OCI-LY7 (cell line): ENCODE measurements at regions of chr12 and their contacts with region 1.

Region 1: DNA sequence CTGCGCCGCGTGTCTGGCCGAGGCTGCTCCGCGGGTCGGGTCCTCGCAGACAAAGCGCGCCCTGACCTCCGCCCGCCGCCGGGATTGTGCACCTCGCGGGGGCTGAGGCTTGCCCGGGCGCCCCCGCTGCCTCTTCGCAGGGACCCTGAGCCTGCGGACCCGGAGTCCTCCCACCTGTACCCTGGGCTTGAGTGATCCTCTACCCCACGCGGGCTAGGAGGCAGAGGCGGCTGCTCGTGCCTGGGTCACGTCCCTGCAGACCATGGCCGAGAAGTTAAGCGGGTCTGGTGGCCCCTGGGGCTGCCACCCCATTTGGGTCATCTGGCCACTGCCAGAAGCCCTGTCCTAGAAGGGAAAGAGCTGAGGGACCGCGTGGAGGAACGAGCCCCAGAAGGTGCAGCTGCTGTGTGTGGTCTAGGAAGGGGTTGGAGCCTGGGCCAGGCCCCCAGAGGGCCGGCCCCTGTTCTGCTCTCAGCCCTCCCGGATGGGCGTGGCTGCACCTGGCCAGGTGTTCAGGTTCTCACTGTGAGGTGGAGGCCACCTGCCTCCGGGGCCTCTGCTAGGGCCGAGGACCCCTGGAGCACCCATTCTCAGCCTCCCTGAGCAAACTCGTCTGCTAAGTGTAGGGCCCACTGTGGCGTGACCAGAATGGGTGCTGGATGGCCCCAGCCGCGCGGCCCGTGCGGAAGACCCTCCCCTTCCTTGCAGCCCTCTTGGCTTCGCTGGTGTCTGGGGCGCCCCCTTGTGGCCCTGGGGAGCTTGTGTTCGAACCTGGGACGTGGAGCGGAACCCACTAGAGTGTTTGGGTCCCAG is 49.6 kb downstream of the LRCOL1 start:
- DNase-seq: peak; percentile 89
- H3K4me3 ChIP-seq: peak overlapping the region; percentile 84
- H3K27ac ChIP-seq: peak overlapping the region; percentile 36
- H3K4me1 ChIP-seq: peaks cover 34% of the 10 kb centered on the region
- CTCF ChIP-seq: peak; percentile 88

Region 2: DNA sequence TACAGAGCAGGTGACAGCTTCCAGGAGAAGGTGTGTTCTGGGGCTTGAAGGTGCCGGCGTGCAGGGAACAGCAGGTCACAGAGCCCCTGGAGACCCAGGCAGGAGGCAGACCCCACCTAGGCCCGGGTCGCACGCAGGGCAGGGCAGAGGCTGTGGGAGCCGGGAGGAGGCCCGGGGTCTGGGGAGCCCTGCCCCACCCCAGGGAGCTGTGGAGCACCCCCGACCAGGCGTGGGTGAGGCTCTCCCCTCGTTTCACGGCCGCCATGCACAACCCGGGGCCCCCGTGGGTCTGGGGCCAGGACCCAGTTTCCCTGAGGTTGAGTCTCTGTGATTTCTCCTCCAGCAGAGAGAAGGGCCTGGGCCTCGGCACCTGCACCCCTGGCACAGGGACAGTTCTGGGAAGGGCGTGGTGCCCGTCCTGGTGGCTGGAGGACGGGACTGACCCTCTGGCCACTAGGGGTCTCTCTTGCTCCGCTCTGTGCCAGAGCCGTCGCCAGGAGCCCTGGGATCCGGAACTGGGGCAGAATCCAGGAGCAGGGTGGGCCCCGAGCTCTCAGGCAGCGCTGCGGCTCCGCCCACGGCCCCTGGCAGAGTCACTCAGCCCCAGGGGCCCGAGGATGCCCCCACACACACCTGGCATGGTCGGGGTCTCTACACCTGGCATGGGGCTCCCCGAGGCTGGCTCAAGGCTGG is 146.0 kb before region 1 on chr12:
- CTCF ChIA-PET with region 1: interaction called, 4 read pairs
- POLR2A ChIA-PET with region 1: no interaction called
- intact Hi-C with region 1: loop called (anchors 1 kb)
- DNase-seq: peak; percentile 82
- H3K4me3 ChIP-seq: no peak overlapping the region
- H3K27ac ChIP-seq: no peak overlapping the region
- H3K4me1 ChIP-seq: no peaks in the 10 kb centered on the region
- CTCF ChIP-seq: peak; percentile 88

Region 3: DNA sequence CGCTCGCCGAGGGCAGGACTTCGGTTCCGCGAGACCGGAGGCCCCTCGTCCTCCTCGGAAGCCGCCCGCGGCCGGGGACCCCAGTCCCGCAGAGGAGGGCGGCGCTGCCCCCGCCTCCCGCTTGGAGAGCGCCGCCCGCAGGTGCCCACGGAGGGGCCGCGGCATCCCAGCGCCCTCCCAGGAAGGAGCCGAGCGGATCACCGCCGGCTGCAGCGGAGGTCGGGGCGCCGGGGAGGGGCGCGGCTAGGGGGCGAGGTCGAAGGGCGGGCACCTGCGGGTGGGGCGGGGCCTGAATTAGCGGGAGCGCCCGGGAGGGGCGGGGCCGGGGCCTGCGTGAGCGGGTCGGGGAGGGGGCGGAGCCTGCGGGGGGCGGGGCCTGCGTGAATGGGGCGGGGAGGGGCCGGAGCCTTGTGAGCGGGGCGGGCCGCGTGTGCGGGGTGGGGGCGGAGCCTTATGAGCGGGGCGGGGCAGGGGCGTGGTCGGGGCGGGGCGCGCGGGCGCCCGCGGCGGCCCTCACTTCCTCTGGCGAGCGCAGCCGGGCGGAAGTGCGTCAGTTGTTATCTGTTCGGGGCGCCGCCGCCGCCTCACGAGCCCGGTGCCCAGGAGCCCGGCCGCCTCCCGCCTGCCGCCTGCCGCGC is 71.1 kb before region 1 on chr12 and contains the start of gene FBRSL1:
- CTCF ChIA-PET with region 1: no interaction called
- POLR2A ChIA-PET with region 1: no interaction called
- intact Hi-C with region 1: loop called (anchors 2 kb)
- DNase-seq: peak; percentile 92
- H3K4me3 ChIP-seq: peak within 1 kb of the TSS; percentile 78
- H3K27ac ChIP-seq: no peak within 1 kb of the TSS
- H3K4me1 ChIP-seq: peaks cover 28% of the 10 kb centered on the region
- CTCF ChIP-seq: no peak
- total RNA-seq, gene FBRSL1: 8.0 and 24.6 TPM in 2 replicates

Region 4: DNA sequence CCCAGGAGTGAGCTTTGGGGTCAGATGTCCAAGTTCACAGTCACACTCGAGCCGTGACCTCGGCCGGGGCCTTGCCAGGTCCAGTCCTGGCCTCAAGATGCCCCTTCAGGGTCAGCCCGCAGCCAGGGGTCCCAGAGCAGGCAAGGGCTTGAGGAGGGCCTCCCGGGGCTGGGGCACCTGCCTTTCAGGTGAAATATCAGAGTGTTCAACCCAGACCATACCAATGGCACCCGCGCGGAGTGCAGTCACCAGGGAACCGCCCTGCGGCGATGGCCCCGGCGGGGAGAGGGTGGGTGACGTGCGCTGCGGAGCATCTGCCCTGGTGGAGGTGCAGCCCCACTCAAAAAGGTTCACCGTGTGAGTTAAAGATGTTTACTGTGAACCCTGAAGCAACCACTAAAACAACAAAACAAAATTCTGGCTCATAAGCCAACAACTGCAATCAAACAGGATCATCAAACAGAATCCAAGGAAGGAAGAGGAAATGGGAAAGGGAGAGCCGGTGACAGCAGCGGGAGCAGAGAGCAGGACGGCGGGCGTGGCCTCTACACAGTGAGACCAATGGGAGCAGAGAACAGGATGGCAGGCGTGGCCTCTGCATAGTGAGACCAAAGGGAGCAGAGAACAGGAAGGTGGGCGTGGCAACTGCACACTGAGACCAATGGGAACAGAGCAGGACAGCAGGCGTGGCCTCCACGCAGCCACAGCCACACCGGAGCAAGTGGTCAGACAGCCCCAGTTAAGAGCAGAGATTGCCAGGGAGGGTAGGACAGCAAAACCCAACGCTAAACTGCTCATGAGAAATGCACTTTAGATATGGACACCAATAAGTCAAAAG is 32.9 kb after region 1 on chr12:
- CTCF ChIA-PET with region 1: no interaction called
- POLR2A ChIA-PET with region 1: no interaction called
- intact Hi-C with region 1: loop called (anchors 2 kb)
- DNase-seq: peak; percentile 89
- H3K4me3 ChIP-seq: no peak overlapping the region
- H3K27ac ChIP-seq: no peak overlapping the region
- H3K4me1 ChIP-seq: peaks cover 3% of the 10 kb centered on the region
- CTCF ChIP-seq: no peak

Region 5: DNA sequence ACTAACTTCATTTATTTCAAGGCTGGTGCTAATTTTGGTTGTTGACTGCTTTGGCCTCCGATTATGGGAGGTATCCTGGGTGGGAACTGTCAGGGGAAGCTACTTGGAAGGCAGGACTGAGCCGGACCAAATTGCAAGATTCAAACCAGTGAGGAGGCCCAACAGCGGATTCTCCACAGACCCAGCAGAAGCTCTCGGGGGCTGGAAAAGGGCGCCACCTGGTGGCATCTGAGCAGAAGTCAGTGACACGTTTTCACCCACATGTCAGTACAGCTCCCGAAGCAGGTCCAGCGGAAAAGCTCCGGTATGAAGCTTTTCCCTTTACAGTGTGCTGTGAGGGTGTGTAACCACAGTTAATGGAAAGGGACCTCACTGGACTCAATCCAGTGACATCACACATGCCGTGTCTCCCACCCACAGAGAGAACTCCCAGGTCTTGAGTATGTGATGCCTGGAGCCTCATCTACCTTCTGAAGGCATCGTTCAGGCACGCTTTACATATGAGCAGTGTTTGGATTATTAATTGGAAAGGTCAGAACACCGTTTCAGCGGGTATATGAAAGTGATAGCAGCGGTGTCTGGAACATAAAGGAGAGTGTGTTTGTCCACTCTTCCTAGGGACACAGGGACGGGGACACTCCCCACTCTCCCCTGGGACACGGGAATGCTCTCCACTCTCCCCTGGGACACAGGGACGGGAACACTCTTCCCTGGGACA is 54.2 kb after region 1 on chr12:
- CTCF ChIA-PET with region 1: no interaction called
- POLR2A ChIA-PET with region 1: no interaction called
- intact Hi-C with region 1: no loop called
- DNase-seq: peak; percentile 84
- H3K4me3 ChIP-seq: no peak overlapping the region
- H3K27ac ChIP-seq: no peak overlapping the region
- H3K4me1 ChIP-seq: peaks cover 9% of the 10 kb centered on the region
- CTCF ChIP-seq: peak; percentile 96

Region 6: GRCh38 chr12:132632501-132633228 is 71.8 kb after region 1 on chr12:
- CTCF ChIA-PET with region 1: no interaction called
- POLR2A ChIA-PET with region 1: no interaction called
- intact Hi-C with region 1: loop called (anchors 1 kb)
- DNase-seq: peak; percentile 89
- H3K4me3 ChIP-seq: peak overlapping the region; percentile 20
- H3K27ac ChIP-seq: peak overlapping the region; percentile 100
- H3K4me1 ChIP-seq: peaks cover 62% of the 10 kb centered on the region
- CTCF ChIP-seq: no peak

Region 7: DNA sequence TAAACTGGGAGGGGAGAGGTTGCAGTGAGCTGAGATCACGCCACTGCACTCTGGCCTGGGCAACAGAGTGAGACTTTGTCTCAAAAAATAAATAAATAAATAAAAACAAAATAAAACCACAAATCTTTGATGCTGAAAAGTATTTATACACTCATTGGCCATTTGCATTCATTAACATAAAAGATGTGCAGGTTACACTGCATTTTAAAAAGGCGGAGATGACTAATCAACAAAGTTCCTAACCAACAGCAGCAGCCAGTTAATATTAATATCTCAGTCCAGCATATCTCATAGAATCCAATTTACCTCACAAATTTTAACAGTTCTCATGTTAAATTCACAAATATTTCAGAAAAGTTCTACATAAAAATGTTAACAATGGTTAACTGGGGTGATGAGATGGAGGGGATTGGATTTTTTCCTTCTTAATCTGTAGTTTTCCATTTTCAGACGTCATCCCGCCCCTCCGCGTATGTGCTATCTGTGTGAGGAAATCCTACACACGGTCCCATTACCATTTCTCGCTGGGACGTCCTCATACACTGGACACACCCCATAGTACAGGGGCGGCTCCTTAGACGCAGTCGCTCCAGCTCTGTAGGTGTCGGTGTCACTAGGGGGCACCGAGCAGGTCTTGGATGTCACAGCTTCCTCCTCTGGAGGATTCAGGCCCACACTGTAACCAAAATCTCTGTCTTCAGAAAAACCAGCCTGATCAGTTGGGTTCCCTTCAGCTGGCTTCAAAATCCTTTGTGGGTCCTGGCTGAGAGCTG is 193.5 kb after region 1 on chr12:
- CTCF ChIA-PET with region 1: no interaction called
- POLR2A ChIA-PET with region 1: no interaction called
- intact Hi-C with region 1: no loop called
- DNase-seq: no peak
- H3K4me3 ChIP-seq: no peak overlapping the region
- H3K27ac ChIP-seq: no peak overlapping the region
- H3K4me1 ChIP-seq: no peaks in the 10 kb centered on the region
- CTCF ChIP-seq: peak; percentile 67

Region 8: DNA sequence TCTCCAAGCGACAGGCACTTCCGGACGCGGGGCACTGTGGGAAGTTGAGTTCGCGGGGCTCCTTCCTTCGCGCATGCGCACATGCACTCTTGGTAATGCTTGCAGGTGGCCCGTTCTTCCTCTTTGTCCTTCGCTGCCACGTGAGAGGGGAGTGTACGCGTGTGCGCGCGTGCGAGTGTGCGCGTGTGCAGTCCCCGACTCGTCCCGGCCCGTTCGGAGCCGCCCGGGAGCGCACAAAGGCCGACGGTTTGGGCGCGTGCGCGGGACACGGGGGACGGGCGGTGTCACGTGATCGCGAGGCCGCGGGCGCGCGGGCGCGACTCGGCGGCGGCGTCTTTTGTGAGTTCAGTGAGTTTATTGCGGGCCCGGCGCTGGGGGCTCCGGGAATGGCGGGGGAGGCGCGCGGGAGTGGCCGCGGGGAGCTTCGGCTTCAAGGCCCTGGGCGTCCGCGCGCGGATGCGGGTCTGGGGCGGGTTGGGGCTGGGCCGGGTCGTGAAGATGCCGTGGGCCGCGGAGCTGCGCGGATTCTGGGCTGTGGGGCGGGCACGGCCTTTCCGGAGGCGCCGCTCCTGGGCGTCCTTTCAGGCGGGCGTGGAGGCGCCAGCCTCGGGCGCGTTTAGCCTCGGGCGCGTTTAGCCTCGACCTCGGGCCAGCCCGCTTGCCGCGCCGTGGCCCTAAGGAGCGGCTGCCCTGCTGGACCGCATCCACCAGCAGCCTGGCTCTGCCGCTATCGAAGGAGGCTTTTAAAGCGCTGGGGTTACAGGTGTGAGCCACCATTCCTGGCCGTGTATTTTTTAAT is 476.6 kb after region 1 on chr12 and contains the start of gene ZNF84:
- CTCF ChIA-PET with region 1: interaction called, 11 read pairs
- POLR2A ChIA-PET with region 1: no interaction called
- intact Hi-C with region 1: no loop called
- DNase-seq: peak; percentile 98
- H3K4me3 ChIP-seq: peak within 1 kb of the TSS; percentile 86
- H3K27ac ChIP-seq: peak within 1 kb of the TSS; percentile 81
- H3K4me1 ChIP-seq: peaks cover 8% of the 10 kb centered on the region
- CTCF ChIP-seq: no peak
- total RNA-seq, gene ZNF84: 22.1 and 26.9 TPM in 2 replicates